ENCODE measurements at regions of chr4 and their contacts with region 1.

Region 1: DNA sequence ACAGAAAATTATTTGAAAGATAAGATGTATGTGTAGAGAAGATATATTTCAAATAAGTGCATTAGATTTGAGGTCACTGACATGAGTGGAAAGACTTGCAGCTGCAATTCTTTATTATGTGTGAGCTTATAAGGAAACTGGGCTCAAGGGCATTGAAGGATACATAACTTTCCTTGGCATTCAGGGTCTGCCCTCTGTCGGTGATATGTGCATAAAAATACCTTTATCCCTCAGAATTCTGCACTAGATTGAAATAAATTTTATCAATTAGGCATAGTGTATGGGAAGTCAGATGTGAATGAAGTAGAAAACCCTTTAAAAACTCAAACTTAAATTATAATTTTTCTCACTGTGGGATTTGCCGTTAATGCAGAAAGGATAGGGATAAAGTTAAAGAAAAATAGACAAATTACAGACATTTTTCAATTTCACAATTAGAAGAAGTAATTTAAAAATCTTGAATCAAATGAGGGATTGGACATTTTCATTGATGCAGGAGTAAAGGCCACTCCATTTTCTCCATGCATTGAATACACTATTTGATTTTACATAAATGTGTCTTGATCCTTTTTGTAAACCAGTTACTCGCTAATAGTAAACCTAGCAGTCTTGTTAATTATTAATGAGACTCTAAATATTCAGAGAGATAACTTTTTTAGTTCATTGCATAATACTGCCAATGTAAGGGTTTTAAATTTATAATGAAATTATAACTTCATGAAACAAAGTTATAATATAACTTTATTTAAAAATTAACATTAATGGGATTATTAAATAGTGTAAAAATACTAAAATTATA is 21.0 kb upstream of the ETNPPL start:
- DNase-seq: no peak
- H3K4me3 ChIP-seq: no peak overlapping the region
- H3K27ac ChIP-seq: no peak overlapping the region
- H3K4me1 ChIP-seq: no peaks in the 10 kb centered on the region
- H3K27me3 ChIP-seq: no peaks in the 10 kb centered on the region
- CTCF ChIP-seq: peak in 1 of 2 donors; percentile 11

Region 2: DNA sequence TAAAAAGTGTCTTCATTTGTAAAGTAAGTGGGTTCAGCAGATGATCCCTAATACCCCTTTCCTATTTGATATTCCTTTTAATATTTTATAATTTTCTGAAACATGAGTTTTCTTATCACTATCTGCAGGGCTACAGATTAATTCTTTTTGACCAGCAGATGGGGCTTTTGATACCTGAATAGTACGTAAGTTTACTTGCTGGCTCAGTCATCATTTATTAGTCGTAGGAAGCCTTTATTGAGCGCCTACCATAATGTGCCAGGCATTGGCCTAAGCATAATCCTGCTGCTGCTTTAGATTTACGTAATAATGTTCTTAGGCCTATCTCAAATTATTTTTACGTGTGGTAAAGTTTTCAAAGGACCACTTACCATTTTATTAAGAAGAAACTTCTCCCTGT is 100.4 kb before region 1 on chr4:
- CTCF ChIA-PET with region 1: no interaction called
- dilution Hi-C with region 1: no loop called
- in situ Hi-C with region 1: no loop called
- intact Hi-C with region 1: loop called (anchors 1 kb)
- DNase-seq: peak; percentile 16
- H3K4me3 ChIP-seq: no peak overlapping the region
- H3K27ac ChIP-seq: no peak overlapping the region
- H3K4me1 ChIP-seq: no peaks in the 10 kb centered on the region
- H3K27me3 ChIP-seq: no peaks in the 10 kb centered on the region
- CTCF ChIP-seq: peak; percentile 29 to 39

Region 3: DNA sequence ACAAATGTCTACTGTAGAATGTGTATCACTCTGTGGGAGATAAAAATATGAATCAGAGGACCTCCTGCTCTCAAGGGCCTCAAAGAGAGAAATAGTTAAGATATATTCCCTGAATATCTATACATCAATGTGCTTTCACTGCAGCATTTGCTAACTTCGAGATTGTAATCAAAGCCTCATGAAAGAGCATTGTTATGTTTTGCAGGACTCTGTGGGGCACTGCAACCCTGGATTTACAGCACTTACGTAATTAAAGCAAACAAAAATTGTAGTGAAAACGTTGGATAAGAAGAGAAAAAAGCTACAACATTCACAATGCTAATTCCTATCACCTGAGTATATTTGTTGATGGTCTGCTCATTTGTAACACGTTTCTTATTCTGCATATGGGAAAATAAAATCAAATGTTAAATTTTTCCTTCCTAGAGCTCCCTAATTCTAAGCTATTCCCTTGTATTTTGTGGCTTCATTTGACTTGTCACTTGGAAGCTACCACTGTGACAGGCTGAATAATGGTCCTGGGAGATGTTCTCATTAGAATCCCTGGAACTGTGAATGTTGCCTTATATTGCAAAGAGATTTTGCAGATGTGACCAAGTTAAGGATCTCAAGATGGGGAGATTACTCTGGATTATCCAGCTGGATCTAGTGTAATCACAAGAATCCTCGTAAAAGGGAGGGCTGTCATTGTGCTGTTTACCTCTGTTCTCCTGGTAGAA is 68.8 kb before region 1 on chr4:
- CTCF ChIA-PET with region 1: no interaction called
- dilution Hi-C with region 1: no loop called
- in situ Hi-C with region 1: no loop called
- intact Hi-C with region 1: no loop called
- DNase-seq: no peak
- H3K4me3 ChIP-seq: no peak overlapping the region
- H3K27ac ChIP-seq: no peak overlapping the region
- H3K4me1 ChIP-seq: no peaks in the 10 kb centered on the region
- H3K27me3 ChIP-seq: no peaks in the 10 kb centered on the region
- CTCF ChIP-seq: no peak

Measured in mammary epithelial cell (primary cell).